ENCODE measurements at regions of chr5 and their contacts with region 1.

Region 1: GRCh38 chr5:112604732-112605630 is 132.7 kb upstream of the APC start:
- DNase-seq: peak; percentile 63 to 66
- H3K4me3 ChIP-seq: no peak overlapping the region
- H3K4me3 Mint-ChIP-seq: no peak overlapping the region
- H3K27ac Mint-ChIP-seq: no peak overlapping the region
- H3K4me1 ChIP-seq: 0 out of 2 replicates have a peak, but pooled peaks cover 3% of the 10 kb centered on the region
- H3K4me1 Mint-ChIP-seq: peaks cover 9% of the 10 kb centered on the region
- H3K27me3 ChIP-seq: no peaks in the 10 kb centered on the region
- H3K27me3 Mint-ChIP-seq: peaks cover 6% of the 10 kb centered on the region
- CTCF ChIP-seq: peak; percentile 59 to 79

Region 2: GRCh38 chr5:112467485-112467884 is 137.5 kb before region 1 on chr5:
- CTCF ChIA-PET with region 1: no interaction called
- POLR2A ChIA-PET with region 1: no interaction called
- intact Hi-C with region 1: no loop called
- DNase-seq: no peak
- H3K4me3 ChIP-seq: no peak overlapping the region
- H3K4me3 Mint-ChIP-seq: no peak overlapping the region
- H3K27ac Mint-ChIP-seq: no peak overlapping the region
- H3K4me1 ChIP-seq: no peaks in the 10 kb centered on the region
- H3K4me1 Mint-ChIP-seq: no peaks in the 10 kb centered on the region
- H3K27me3 ChIP-seq: no peaks in the 10 kb centered on the region
- H3K27me3 Mint-ChIP-seq: peaks cover 17% of the 10 kb centered on the region
- CTCF ChIP-seq: no peak

Region 3: DNA sequence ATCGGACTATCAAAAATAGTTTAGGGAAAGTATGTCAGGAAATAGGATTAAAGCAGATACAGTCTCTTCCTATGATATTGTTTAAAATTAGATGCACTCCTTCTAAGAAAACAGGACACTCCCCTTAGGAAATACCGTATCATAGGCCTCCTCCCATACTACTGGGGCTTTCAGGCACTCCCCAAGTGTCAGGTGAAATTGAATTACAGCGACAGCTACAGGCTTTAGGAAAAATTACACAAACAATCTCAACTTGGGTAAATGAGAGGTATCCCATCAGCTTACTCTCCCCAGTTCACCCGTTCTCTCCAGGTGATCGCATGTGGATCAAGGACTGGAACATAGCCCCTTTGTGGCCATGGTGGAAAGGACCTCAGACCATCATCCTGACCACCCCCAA is 75.5 kb before region 1 on chr5:
- CTCF ChIA-PET with region 1: no interaction called
- POLR2A ChIA-PET with region 1: no interaction called
- intact Hi-C with region 1: no loop called
- DNase-seq: no peak
- H3K4me3 ChIP-seq: no peak overlapping the region
- H3K4me3 Mint-ChIP-seq: no peak overlapping the region
- H3K27ac Mint-ChIP-seq: no peak overlapping the region
- H3K4me1 ChIP-seq: no peaks in the 10 kb centered on the region
- H3K4me1 Mint-ChIP-seq: no peaks in the 10 kb centered on the region
- H3K27me3 ChIP-seq: no peaks in the 10 kb centered on the region
- H3K27me3 Mint-ChIP-seq: peaks cover under 1% of the 10 kb centered on the region
- CTCF ChIP-seq: peak; percentile 18 to 34

Region 4: GRCh38 chr5:112576298-112576925 is 28.6 kb before region 1 on chr5:
- CTCF ChIA-PET with region 1: no interaction called
- POLR2A ChIA-PET with region 1: no interaction called
- intact Hi-C with region 1: no loop called
- DNase-seq: no peak
- H3K4me3 ChIP-seq: no peak overlapping the region
- H3K4me3 Mint-ChIP-seq: no peak overlapping the region
- H3K27ac Mint-ChIP-seq: no peak overlapping the region
- H3K4me1 ChIP-seq: no peaks in the 10 kb centered on the region
- H3K4me1 Mint-ChIP-seq: no peaks in the 10 kb centered on the region
- H3K27me3 ChIP-seq: no peaks in the 10 kb centered on the region; the same call in 1 of the 2 replicates
- H3K27me3 Mint-ChIP-seq: peaks cover 13% of the 10 kb centered on the region
- CTCF ChIP-seq: no peak

Region 5: GRCh38 chr5:112669328-112669963 is 64.5 kb after region 1 on chr5:
- CTCF ChIA-PET with region 1: no interaction called
- POLR2A ChIA-PET with region 1: no interaction called
- intact Hi-C with region 1: no loop called
- DNase-seq: no peak
- H3K4me3 ChIP-seq: no peak overlapping the region
- H3K4me3 Mint-ChIP-seq: no peak overlapping the region
- H3K27ac Mint-ChIP-seq: no peak overlapping the region
- H3K4me1 ChIP-seq: no peaks in the 10 kb centered on the region
- H3K4me1 Mint-ChIP-seq: no peaks in the 10 kb centered on the region
- H3K27me3 ChIP-seq: no peaks in the 10 kb centered on the region
- H3K27me3 Mint-ChIP-seq: peaks cover 8% of the 10 kb centered on the region
- CTCF ChIP-seq: no peak

Region 6: DNA sequence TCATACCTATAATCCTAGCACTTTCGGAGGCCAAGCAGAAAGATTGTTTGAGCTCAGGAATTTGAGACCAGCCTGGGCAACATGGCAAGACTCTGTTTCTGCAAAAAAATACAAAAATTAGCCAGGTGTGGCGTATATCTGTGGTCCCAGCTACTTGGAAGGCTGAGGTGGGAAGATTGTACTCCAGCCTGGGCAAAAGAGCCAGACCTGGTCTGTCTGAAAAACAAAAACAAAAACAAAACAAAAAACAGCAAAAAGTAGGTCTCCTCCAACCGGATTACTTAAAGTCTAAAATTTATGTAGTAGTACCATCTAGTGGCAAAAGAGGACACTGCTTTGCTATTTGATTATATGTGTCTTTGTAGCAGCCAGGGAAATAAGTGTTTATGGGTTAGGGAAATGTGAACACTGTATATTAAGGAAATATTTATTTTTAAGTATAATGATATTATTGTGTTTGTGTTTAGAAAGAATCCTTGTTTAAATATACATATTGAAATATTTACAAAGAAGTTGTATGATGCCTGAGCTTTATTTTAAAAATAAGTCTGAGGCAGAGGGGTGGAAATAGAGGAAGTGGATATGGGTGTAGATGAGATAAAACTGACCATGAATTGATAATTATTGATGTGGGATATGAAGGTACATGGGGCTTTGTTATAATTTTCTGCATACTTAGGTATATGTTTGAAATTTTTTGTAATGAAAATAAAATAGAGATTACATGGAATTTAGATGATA is 152.7 kb after region 1 on chr5:
- CTCF ChIA-PET with region 1: interaction called, 6 read pairs
- POLR2A ChIA-PET with region 1: no interaction called
- intact Hi-C with region 1: loop called (anchors 5 kb)
- DNase-seq: peak in 1 of 2 experiments; percentile 43
- H3K4me3 ChIP-seq: no peak overlapping the region
- H3K4me3 Mint-ChIP-seq: no peak overlapping the region
- H3K27ac Mint-ChIP-seq: no peak overlapping the region
- H3K4me1 ChIP-seq: no peaks in the 10 kb centered on the region
- H3K4me1 Mint-ChIP-seq: no peaks in the 10 kb centered on the region
- H3K27me3 ChIP-seq: no peaks in the 10 kb centered on the region
- H3K27me3 Mint-ChIP-seq: no peaks in the 10 kb centered on the region
- CTCF ChIP-seq: peak; percentile 61 to 78